SK-N-SH (cell line): ENCODE measurements at regions of chr17 and their contacts with region 1.

Region 1: GRCh38 chr17:7856883-7857723 is at the start of gene NAA38:
- DNase-seq: peak; percentile 90
- H3K4me3 ChIP-seq: peak within 1 kb of the TSS; percentile 72 to 77
- H3K27ac ChIP-seq: peak within 1 kb of the TSS; percentile 93 to 100
- H3K4me1 ChIP-seq: peaks cover 23 to 35% of the 10 kb centered on the region in 2 experiments; a peak in 3 of 4 replicates
- H3K27me3 ChIP-seq: no peaks in the 10 kb centered on the region
- CTCF ChIP-seq: peak; percentile 47
- EP300 ChIP-seq: 0 out of 4 replicates have a peak, but pooled peaks of 1 of the 2 experiments have one; percentile 6
- RAD21 ChIP-seq: peak; percentile 38
- polyA plus RNA-seq, gene NAA38: 133 and 202 TPM in 2 replicates

Region 2: GRCh38 chr17:7740481-7741001 is 116.6 kb before region 1 on chr17:
- CTCF ChIA-PET with region 1: interaction called, 22 read pairs
- POLR2A ChIA-PET with region 1: interaction called, 9 read pairs
- DNase-seq: no peak
- H3K4me3 ChIP-seq: no peak overlapping the region
- H3K27ac ChIP-seq: no peak overlapping the region
- H3K4me1 ChIP-seq: peaks cover 0 to 2% of the 10 kb centered on the region in 2 experiments; a peak in 2 of 4 replicates
- H3K27me3 ChIP-seq: peaks cover 19% of the 10 kb centered on the region
- CTCF ChIP-seq: no peak
- EP300 ChIP-seq: no peak
- RAD21 ChIP-seq: no peak

Region 3: DNA sequence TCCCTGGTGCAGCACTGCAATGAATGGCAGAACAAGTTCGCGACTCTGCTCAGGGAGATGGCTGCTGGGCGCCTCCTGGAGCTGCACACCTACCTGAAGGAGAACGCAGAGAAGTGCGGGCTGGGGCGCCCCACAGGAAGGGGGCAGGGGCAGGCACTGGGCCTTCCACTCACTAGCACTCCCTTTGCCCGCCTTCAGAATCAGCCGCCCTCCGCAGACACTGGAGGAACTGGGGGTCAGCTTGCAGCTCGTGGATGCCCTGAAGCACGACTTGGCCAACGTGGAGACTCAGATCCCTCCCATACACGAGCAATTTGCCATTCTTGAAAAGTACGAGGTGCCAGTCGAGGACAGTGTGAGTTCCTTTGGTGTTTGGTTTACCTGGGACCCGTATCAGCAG is 93.2 kb before region 1 on chr17:
- CTCF ChIA-PET with region 1: no interaction called
- POLR2A ChIA-PET with region 1: no interaction called
- DNase-seq: no peak
- H3K4me3 ChIP-seq: no peak overlapping the region
- H3K27ac ChIP-seq: no peak overlapping the region
- H3K4me1 ChIP-seq: no peaks in the 10 kb centered on the region
- H3K27me3 ChIP-seq: no peaks in the 10 kb centered on the region; the same call in 1 of the 2 replicates
- CTCF ChIP-seq: no peak
- EP300 ChIP-seq: no peak
- RAD21 ChIP-seq: no peak

Region 4: GRCh38 chr17:7825206-7825990 is 31.7 kb before region 1 on chr17:
- CTCF ChIA-PET with region 1: interaction called, 44 read pairs
- POLR2A ChIA-PET with region 1: interaction called, 3 read pairs
- DNase-seq: peak; percentile 69
- H3K4me3 ChIP-seq: no peak overlapping the region
- H3K27ac ChIP-seq: no peak overlapping the region
- H3K4me1 ChIP-seq: peaks cover 0 to 12% of the 10 kb centered on the region in 2 experiments; a peak in 1 of 4 replicates
- H3K27me3 ChIP-seq: peaks cover 2% of the 10 kb centered on the region
- CTCF ChIP-seq: peak; percentile 40
- EP300 ChIP-seq: no peak
- RAD21 ChIP-seq: peak; percentile 28; the same call in 1 of the 2 replicates

Region 5: DNA sequence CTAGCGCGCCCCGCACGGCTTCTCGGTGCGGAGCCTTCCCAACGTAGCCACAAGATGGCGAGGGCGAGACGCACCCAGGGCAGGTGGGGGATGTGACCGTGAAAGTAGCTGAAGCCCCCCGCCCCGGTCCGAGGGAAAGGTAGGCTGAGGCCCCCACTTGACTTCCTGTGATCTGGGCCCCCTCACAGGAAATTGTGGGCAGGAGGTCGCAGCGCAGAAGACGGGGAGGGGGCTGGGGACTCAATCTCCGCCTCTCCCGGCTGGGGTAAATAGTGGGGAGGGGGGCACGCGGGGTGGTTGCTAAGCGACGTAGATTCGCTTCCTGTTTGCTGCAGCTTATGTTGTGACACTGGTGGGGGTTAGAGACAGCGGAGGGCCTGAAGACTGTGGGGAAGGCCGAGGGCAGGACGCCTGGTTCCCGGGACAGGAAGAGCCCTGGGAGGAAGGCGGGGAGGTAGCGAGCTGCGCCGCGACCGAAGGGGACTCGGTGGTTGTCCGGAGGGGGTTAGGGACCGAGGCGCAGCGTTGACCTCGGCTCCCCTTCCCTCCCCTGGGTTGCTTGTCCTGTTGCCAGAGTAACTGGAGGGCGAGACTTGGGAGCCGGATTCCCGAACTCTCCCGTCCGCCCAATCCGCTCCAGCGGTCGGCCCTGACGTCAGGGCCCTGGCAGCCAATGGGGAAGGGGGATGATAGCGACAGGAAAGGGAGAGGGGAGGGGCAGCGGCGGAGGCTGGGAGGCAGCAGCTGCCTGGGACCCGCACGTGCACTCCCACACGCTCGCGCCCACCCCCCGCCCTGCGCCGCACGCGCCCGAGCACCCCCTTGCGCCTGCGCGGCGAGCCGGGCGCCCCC is 21.9 kb before region 1 on chr17:
- CTCF ChIA-PET with region 1: interaction called, 58 read pairs
- POLR2A ChIA-PET with region 1: interaction called, 17 read pairs
- DNase-seq: peak; percentile 92
- H3K4me3 ChIP-seq: peak overlapping the region; percentile 90 to 97
- H3K27ac ChIP-seq: peak overlapping the region; percentile 98 to 99
- H3K4me1 ChIP-seq: peaks cover 21 to 27% of the 10 kb centered on the region in 2 experiments
- H3K27me3 ChIP-seq: peaks cover 7% of the 10 kb centered on the region; the same call in 1 of the 2 replicates
- CTCF ChIP-seq: peak; percentile 77
- EP300 ChIP-seq: no peak; a peak in 2 of 4 replicates
- RAD21 ChIP-seq: peak; percentile 75

Region 6: GRCh38 chr17:7844292-7845154 is 12.6 kb before region 1 on chr17:
- CTCF ChIA-PET with region 1: interaction called, 5 read pairs
- POLR2A ChIA-PET with region 1: interaction called, 13 read pairs
- DNase-seq: peak; percentile 93
- H3K4me3 ChIP-seq: peak overlapping the region; percentile 66 to 67
- H3K27ac ChIP-seq: peak overlapping the region; percentile 86 to 100
- H3K4me1 ChIP-seq: peaks cover 26 to 32% of the 10 kb centered on the region in 2 experiments
- H3K27me3 ChIP-seq: no peaks in the 10 kb centered on the region
- CTCF ChIP-seq: no peak
- EP300 ChIP-seq: peak in 1 of 2 experiments; percentile 63; a peak in 1 of 4 replicates
- RAD21 ChIP-seq: no peak

Region 7: GRCh38 chr17:8103549-8103948 is 246.4 kb after region 1 on chr17:
- CTCF ChIA-PET with region 1: no interaction called
- POLR2A ChIA-PET with region 1: no interaction called
- DNase-seq: no peak
- H3K4me3 ChIP-seq: no peak overlapping the region
- H3K27ac ChIP-seq: no peak overlapping the region
- H3K4me1 ChIP-seq: no peaks in the 10 kb centered on the region
- H3K27me3 ChIP-seq: no peaks in the 10 kb centered on the region
- CTCF ChIP-seq: no peak
- EP300 ChIP-seq: no peak
- RAD21 ChIP-seq: no peak